Activated CD8-positive, alpha-beta T cell treated with anti-CD3 and anti-CD28 coated beads for 36 hours (primary cell): ENCODE measurements at regions of chr20 and their contacts with region 1.

Region 1: DNA sequence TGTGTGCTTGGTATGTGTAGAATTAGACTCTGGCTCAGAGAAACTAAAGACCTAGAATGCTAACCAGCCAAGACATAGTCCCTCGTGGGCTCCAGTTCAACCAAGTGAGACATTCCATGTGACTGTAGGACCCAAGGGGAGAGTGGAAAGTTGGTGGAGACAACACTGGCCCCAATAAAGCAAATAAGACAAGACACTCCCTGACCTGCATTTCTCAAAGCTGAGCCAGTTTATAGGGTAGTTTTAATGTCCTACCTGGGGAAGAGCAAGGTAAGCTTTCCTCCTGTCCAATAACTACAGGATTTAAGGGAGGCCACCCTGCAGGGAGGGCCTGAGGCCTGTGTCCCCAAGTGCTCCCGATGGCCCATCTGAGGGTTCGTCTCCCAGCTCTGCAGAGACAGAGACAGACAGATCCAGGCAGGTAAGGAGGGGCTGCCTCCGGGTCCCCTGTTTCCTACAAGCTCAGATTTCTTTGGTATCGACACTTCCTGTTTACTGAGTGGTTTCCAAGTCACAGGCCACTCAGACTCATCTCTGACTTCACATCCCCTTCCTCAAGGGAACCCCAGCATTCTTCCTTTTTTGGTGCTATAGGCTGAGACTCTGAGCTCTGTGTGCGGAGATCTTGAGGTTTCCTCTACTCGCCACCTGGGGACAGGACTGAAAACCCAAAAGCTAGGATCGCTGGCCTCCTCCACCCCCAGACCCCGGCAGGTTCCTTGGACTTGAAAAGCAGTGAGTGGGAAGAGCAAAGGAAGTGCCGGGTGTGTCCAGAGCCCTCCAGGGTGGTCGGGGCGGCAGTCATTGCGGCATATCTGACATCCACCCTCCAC is 92.4 kb downstream of the PRND start:
- DNase-seq: peak; percentile 70
- ATAC-seq: peak; percentile 68
- H3K4me3 Mint-ChIP-seq: peak overlapping the region; percentile 100
- H3K27ac Mint-ChIP-seq: peak overlapping the region; percentile 100
- H3K4me1 Mint-ChIP-seq: peaks cover 63% of the 10 kb centered on the region
- H3K27me3 Mint-ChIP-seq: no peaks in the 10 kb centered on the region
- CTCF ChIP-seq: no peak

Region 2: DNA sequence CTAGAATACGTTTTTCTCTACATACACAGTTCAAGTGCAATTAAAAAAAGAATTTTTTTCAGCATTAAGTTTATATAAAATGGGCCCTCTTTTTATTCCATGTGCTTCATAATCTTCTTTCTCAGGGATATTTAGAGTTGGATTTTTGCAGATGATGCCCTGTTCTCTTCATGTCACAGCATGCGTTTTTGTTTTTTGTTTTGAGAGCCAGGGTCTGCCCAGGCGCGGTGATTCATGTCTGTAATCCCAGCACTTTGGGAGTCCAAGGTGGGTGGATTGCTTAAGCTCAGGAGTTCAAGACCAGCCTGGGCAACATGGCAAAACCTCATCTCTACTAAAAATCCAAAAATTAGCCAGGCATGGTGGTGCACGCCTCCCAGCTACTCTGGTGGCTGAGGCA is 175.3 kb before region 1 on chr20:
- CTCF ChIA-PET with region 1: no interaction called
- POLR2A ChIA-PET with region 1: no interaction called
- intact Hi-C with region 1: no loop called
- DNase-seq: no peak
- ATAC-seq: no peak
- H3K4me3 Mint-ChIP-seq: no peak overlapping the region
- H3K27ac Mint-ChIP-seq: no peak overlapping the region
- H3K4me1 Mint-ChIP-seq: peaks cover 2% of the 10 kb centered on the region
- H3K27me3 Mint-ChIP-seq: peaks cover 4% of the 10 kb centered on the region
- CTCF ChIP-seq: no peak

Region 3: DNA sequence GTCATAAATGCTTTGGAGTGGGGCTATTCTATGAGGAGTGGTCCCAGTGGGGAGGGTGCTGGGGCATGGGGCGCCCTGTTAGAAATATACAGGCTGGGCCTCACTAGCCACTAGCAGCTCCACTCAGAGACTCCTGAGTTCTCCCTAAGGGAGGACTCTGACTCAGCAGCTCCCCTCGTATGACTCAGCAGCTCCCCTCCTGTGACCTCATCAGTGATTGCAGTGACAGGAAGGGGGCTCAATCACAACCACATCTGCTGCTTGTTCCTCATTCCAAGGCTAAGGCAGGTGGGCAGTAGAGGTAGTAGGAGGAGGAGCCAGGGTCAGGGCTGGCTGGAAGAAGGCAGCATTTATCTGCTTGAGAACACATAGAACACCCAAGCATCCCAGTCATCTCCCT is 18.7 kb before region 1 on chr20:
- CTCF ChIA-PET with region 1: interaction called, 3 read pairs
- POLR2A ChIA-PET with region 1: interaction called, 21 read pairs
- intact Hi-C with region 1: no loop called
- DNase-seq: peak; percentile 66
- ATAC-seq: peak; percentile 80
- H3K4me3 Mint-ChIP-seq: no peak overlapping the region
- H3K27ac Mint-ChIP-seq: peak overlapping the region; percentile 49
- H3K4me1 Mint-ChIP-seq: peaks cover 19% of the 10 kb centered on the region
- H3K27me3 Mint-ChIP-seq: no peaks in the 10 kb centered on the region
- CTCF ChIP-seq: no peak

Region 4: GRCh38 chr20:5119435-5120188 is 305.5 kb after region 1 on chr20 and contains the start of gene PCNA:
- CTCF ChIA-PET with region 1: no interaction called
- POLR2A ChIA-PET with region 1: interaction called, 12 read pairs
- intact Hi-C with region 1: no loop called
- DNase-seq: peak; percentile 99
- ATAC-seq: peak; percentile 92
- H3K4me3 Mint-ChIP-seq: peak within 1 kb of the TSS; percentile 90
- H3K27ac Mint-ChIP-seq: peak within 1 kb of the TSS; percentile 94
- H3K4me1 Mint-ChIP-seq: peaks cover 39% of the 10 kb centered on the region
- H3K27me3 Mint-ChIP-seq: no peaks in the 10 kb centered on the region
- CTCF ChIP-seq: no peak
- total RNA-seq, gene PCNA: 600 to 627 TPM